CD8-positive, alpha-beta memory T cell (primary cell): ENCODE measurements at regions of chr17 and their contacts with region 1.

Region 1: GRCh38 chr17:42120770-42121769 is at the start of gene KAT2A:
- DNase-seq: peak; percentile 60 to 80 (median 67)
- H3K4me3 ChIP-seq: peak within 1 kb of the TSS; percentile 26
- H3K4me3 Mint-ChIP-seq: peak within 1 kb of the TSS; percentile 62 to 87 (median 77)
- H3K27ac ChIP-seq: no peak within 1 kb of the TSS
- H3K27ac Mint-ChIP-seq: peak within 1 kb of the TSS in 7 of 8 donors; percentile 50 to 81 (median 61)
- H3K4me1 ChIP-seq: peaks cover 14% of the 10 kb centered on the region
- H3K4me1 Mint-ChIP-seq: peaks cover 21 to 26% (median 25%) of the 10 kb centered on the region in 3 donors
- H3K27me3 ChIP-seq: no peaks in the 10 kb centered on the region
- H3K27me3 Mint-ChIP-seq: no peaks in the 10 kb centered on the region
- total RNA-seq, gene KAT2A: 52.5 to 53.3 TPM

Region 2: DNA sequence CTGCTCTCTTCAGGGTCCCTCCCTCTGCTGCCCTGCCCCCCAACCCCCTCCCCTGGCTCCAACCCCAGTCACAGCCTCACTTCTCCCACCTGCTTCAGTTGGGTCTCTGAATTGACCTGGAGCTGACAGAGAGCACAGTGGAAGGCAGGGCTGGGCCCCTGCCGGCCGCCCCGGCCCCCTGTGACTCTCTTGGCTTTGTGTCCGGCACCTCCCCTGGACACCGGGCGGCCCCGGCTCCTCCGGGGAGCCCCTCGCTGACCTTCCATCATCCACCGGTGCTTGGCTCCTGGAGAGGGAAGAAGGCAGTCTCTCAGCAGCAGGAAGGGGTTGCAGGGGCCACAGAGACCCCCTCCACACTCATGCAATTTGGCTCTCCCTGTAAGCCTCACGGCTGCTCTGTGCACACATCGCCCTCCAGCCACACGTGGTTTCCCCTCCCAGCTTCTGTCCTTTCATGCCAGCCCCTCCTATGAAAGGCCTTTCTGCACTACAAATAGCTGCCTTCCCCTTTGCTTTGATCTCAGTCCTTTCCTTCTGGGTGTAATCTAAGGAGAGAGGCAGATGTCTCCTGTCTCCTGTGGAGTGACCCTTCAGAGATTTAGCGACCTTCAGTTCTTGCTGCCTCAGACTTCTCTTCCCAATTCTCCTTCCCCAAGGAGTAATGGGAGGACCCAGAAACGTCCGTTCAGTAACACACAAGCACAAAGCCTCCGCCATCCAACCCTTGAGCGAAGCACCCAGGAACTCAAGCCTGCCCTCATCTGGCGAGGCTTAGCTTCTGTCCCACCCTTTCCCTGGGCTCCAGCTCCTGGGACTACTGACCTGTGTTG is 92.9 kb before region 1 on chr17:
- CTCF ChIA-PET with region 1: interaction called, 109 read pairs
- POLR2A ChIA-PET with region 1: interaction called, 3 read pairs
- DNase-seq: no peak
- H3K4me3 ChIP-seq: no peak overlapping the region
- H3K4me3 Mint-ChIP-seq: no peak overlapping the region
- H3K27ac ChIP-seq: no peak overlapping the region
- H3K27ac Mint-ChIP-seq: no peak overlapping the region
- H3K4me1 ChIP-seq: peaks cover 6% of the 10 kb centered on the region
- H3K4me1 Mint-ChIP-seq: peaks cover 3 to 5% (median 5%) of the 10 kb centered on the region in 3 donors
- H3K27me3 ChIP-seq: no peaks in the 10 kb centered on the region
- H3K27me3 Mint-ChIP-seq: peaks cover 0 to 12% of the 10 kb centered on the region in 2 donors

Region 3: DNA sequence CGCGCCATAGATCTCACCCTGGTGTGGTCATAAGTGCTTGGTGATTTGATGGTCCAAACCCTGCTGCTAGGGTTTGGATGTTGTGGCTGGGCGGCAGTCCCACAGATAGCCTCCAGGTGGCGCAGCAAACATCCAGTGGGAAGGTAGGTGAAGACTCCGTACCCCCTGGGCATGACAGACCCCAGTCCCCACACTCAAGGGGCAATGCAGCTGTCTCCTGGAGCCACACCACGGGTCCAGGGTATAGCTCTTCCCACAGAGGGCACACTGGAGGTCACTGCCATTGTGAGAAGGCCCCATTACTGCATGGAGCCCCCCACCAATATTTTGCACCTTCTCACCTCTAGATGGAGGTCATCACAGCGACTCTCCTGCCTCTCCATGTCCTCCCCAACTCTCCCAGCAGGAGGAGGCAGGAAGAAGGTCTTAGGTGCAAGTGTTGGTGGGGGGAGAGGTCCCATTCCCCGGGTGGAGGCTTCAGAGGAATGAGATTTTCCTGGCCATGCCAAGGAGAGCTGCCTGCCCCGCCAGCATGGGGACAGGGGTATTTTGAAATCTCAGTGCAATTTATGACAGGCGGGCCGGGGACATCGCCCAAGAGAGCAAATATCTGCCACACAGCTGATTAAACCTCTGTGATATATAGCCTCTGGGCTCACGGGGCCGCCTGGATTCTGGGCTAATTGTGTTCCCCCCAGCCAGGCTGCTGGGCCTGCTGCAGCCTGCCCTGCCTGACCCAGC is 53.5 kb before region 1 on chr17:
- CTCF ChIA-PET with region 1: interaction called, 57 read pairs
- POLR2A ChIA-PET with region 1: interaction called, 6 read pairs
- DNase-seq: peak; percentile 43 to 78 (median 62)
- H3K4me3 ChIP-seq: no peak overlapping the region
- H3K4me3 Mint-ChIP-seq: no peak overlapping the region
- H3K27ac ChIP-seq: no peak overlapping the region
- H3K27ac Mint-ChIP-seq: peak overlapping the region in 1 of 8 donors; percentile 60
- H3K4me1 ChIP-seq: peaks cover 20% of the 10 kb centered on the region
- H3K4me1 Mint-ChIP-seq: peaks cover 9 to 20% (median 13%) of the 10 kb centered on the region in 3 donors
- H3K27me3 ChIP-seq: peaks cover 9% of the 10 kb centered on the region
- H3K27me3 Mint-ChIP-seq: peaks cover 17 to 24% of the 10 kb centered on the region in 2 donors